ENCODE measurements at regions of chr17 and their contacts with region 1.

Region 1: DNA sequence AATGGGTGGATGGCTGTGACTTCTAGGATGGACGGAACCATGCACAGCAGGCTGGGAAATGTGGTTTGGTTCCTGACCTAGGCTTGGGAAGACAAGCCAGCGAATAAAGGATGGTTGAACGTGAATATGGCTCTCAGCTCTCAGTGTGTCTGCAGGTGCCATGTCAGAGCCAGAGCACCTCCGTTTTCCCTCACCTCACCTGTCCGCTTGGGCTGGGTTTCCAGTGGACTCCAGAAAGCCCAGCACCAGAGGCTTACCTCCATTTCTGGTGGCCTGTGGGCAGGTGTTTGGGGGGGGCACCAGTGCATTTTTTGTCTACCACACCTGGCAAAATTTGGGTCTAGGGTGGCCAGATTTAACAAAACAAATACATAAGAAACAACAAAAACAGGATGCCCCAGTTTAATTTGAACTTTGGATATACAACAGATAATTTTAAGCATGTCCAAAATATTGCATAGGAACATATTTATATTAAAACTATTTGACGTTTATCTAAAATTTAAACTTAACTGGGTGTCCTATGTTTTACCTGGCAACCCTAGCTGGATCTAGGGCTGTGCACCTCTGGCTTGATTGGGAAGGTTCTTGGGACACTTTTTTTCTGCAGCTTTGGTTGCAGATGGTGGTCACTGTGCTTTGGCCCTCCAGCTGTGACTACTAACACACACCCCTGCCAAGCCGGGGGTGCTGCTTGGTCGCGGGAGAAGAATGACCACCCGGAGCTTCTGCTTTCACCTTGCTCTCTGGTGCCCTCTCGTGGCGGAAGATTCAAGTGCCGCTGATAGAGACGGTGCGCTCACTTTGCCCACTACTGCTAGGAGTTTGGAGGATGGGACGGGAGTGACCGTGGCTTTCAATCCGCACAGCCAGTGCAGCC is 6.3 kb downstream of the SPACA3 start:
- DNase-seq: peak; percentile 68
- ATAC-seq: peak; percentile 96
- H3K4me3 ChIP-seq: no peak overlapping the region
- H3K27ac ChIP-seq: no peak overlapping the region
- H3K4me1 ChIP-seq: peaks cover 5% of the 10 kb centered on the region; the same call in 1 of the 2 replicates
- H3K27me3 ChIP-seq: peaks cover 17% of the 10 kb centered on the region; the same call in 1 of the 2 replicates
- CTCF ChIP-seq: peak; percentile 85
- POLR2A ChIP-seq: no peak
- RAD21 ChIP-seq: peak; percentile 62

Region 2: DNA sequence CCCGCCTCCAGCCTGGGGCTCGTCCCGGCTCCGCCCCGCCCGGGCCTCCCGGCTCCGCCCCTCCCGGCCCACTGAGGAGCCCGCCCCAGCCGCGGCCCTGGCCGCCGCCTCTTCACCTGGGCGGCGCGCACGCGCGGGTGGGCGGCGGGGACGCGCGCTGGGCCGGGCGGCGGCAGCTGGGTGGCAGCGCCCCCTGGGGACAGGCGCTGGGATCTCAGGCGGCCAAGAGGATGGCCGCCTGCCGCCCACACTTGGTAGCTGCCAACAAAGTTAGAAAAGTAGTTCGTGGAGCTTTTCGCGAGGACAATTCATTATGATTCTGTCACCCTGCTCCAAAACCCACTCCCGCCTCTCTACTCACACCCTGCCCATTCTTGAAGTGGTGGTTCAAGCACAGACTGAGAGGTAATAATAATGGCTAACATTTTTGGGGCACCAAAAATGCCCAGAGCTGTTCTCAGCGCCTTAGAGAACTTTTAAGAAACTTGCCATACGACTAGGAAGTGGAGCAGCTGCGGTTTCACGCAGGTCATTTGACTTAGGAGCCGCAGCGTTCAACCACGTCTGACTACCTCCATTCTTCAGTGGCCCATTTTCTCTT is 120.7 kb before region 1 on chr17:
- CTCF ChIA-PET with region 1: interaction called, 7 read pairs
- POLR2A ChIA-PET with region 1: no interaction called
- dilution Hi-C with region 1: no loop called
- in situ Hi-C with region 1: no loop called
- intact Hi-C with region 1: loop called (anchors 1 kb)
- DNase-seq: peak; percentile 73
- ATAC-seq: peak; percentile 100
- H3K4me3 ChIP-seq: peak overlapping the region; percentile 60
- H3K27ac ChIP-seq: no peak overlapping the region
- H3K4me1 ChIP-seq: peaks cover 2% of the 10 kb centered on the region
- H3K27me3 ChIP-seq: peaks cover 7% of the 10 kb centered on the region
- CTCF ChIP-seq: peak; percentile 95
- POLR2A ChIP-seq: no peak
- RAD21 ChIP-seq: peak; percentile 52

Region 3: DNA sequence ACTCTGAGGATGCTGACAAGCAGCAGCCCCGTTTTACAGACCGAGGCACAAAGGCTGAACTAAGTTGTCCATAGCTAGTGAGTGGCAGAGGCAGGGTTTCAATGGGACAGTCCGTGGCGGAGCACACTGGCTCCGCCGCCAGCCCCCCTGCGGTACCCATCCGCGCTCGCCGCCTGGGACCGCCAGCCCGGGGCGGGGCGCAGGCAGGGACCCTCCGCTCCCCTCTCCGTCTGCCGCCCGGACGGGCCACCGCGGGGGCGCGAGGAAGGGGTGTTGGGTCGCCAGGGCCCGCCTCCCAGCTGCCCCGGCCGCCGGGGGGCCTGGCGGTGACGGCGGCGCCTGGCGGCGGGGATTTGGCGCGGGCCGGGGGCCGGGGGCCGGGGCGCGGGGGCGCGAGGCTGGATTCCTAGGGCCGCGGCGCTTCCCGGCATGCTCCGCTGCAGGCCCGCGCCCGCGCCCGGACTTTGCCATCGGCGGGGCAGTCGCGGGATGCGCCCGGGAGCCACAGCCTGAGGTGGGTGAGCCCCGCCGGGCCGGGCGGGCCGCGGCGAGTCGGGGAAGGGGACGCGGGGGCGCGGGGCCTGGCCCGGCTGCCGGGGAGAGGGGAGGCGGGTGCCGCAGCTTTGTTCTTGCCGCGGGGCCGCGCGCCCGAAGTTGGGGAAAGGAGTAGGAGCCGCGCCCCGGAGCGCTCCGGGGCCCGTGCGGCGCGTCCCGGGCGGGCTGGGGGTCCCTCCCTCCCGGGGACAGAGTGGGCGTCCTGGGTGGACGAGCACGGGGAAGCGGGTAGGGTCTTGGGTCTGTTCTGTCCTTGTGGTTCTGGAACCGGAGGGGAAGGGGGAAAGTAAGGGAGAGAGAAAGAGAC is 70.0 kb before region 1 on chr17 and contains the start of gene TMEM98:
- CTCF ChIA-PET with region 1: interaction called, 3 read pairs
- POLR2A ChIA-PET with region 1: no interaction called
- dilution Hi-C with region 1: no loop called
- in situ Hi-C with region 1: no loop called
- intact Hi-C with region 1: loop called (anchors 5 kb)
- DNase-seq: peak; percentile 12
- ATAC-seq: peak; percentile 81
- H3K4me3 ChIP-seq: peak within 1 kb of the TSS; percentile 79
- H3K27ac ChIP-seq: peak within 1 kb of the TSS; percentile 94
- H3K4me1 ChIP-seq: peaks cover 16% of the 10 kb centered on the region
- H3K27me3 ChIP-seq: no peaks in the 10 kb centered on the region
- CTCF ChIP-seq: no peak
- POLR2A ChIP-seq: no peak
- RAD21 ChIP-seq: no peak
- total RNA-seq, gene TMEM98: 129 and 173 TPM in 2 replicates

Region 4: GRCh38 chr17:32943647-32944191 is 54.3 kb before region 1 on chr17:
- CTCF ChIA-PET with region 1: no interaction called
- POLR2A ChIA-PET with region 1: no interaction called
- dilution Hi-C with region 1: no loop called
- in situ Hi-C with region 1: no loop called
- intact Hi-C with region 1: loop called (anchors 5 kb)
- DNase-seq: peak; percentile 76
- ATAC-seq: peak; percentile 80
- H3K4me3 ChIP-seq: no peak overlapping the region
- H3K27ac ChIP-seq: peak overlapping the region; percentile 68; the same call in 1 of the 2 replicates
- H3K4me1 ChIP-seq: peaks cover 14% of the 10 kb centered on the region
- H3K27me3 ChIP-seq: no peaks in the 10 kb centered on the region
- CTCF ChIP-seq: no peak
- POLR2A ChIP-seq: no peak
- RAD21 ChIP-seq: no peak

Region 5: DNA sequence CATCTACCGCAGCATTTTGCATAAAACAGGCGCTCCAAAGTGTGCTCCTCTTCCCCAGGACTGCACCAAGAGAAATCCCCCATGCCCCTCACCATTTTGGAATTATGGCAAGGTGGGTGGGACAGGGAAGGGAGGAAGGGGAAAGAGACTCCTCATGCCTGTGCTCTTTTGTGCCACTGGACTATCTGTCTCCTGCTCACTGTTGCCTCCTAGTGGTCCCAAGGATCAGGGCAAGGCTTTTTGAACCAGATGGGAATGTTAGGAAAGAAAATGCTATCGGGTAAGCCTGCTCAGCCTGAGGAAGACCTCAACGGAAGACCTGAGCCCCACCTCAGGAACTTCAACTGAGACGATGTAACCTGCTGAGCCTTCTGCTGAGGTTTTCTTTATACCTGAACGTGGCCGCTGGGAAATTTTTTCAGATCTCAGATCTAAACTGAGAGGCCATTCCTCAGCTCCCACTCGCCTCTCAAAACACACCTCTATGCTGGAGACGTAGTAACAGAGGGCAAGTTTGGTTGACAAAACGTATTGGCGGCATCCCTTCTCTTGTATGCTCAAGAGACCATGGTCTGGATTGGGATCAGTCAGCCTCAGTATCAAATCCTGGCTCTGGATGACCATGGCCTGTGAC is 51.9 kb after region 1 on chr17:
- CTCF ChIA-PET with region 1: no interaction called
- POLR2A ChIA-PET with region 1: no interaction called
- dilution Hi-C with region 1: no loop called
- in situ Hi-C with region 1: no loop called
- intact Hi-C with region 1: no loop called
- DNase-seq: peak; percentile 48
- ATAC-seq: peak; percentile 96
- H3K4me3 ChIP-seq: no peak overlapping the region
- H3K27ac ChIP-seq: no peak overlapping the region
- H3K4me1 ChIP-seq: no peaks in the 10 kb centered on the region
- H3K27me3 ChIP-seq: peaks cover 4% of the 10 kb centered on the region
- CTCF ChIP-seq: peak; percentile 81
- POLR2A ChIP-seq: no peak
- RAD21 ChIP-seq: peak; percentile 58

Region 6: GRCh38 chr17:33091271-33091670 is 93.3 kb after region 1 on chr17:
- CTCF ChIA-PET with region 1: no interaction called
- POLR2A ChIA-PET with region 1: no interaction called
- dilution Hi-C with region 1: no loop called
- in situ Hi-C with region 1: no loop called
- intact Hi-C with region 1: no loop called
- DNase-seq: no peak
- ATAC-seq: no peak
- H3K4me3 ChIP-seq: no peak overlapping the region
- H3K27ac ChIP-seq: no peak overlapping the region
- H3K4me1 ChIP-seq: no peaks in the 10 kb centered on the region
- H3K27me3 ChIP-seq: peaks cover 2% of the 10 kb centered on the region
- CTCF ChIP-seq: no peak
- POLR2A ChIP-seq: no peak
- RAD21 ChIP-seq: no peak

Region 7: GRCh38 chr17:33674685-33675084 is 676.7 kb after region 1 on chr17:
- CTCF ChIA-PET with region 1: no interaction called
- POLR2A ChIA-PET with region 1: no interaction called
- dilution Hi-C with region 1: no loop called
- in situ Hi-C with region 1: no loop called
- intact Hi-C with region 1: loop called (anchors 1 kb)
- DNase-seq: peak; percentile 55
- ATAC-seq: peak; percentile 99
- H3K4me3 ChIP-seq: no peak overlapping the region
- H3K27ac ChIP-seq: no peak overlapping the region
- H3K4me1 ChIP-seq: no peaks in the 10 kb centered on the region
- H3K27me3 ChIP-seq: no peaks in the 10 kb centered on the region
- CTCF ChIP-seq: peak; percentile 67
- POLR2A ChIP-seq: no peak
- RAD21 ChIP-seq: peak; percentile 49